ENCODE measurements at regions of chr10 and their contacts with region 1.

Region 1: DNA sequence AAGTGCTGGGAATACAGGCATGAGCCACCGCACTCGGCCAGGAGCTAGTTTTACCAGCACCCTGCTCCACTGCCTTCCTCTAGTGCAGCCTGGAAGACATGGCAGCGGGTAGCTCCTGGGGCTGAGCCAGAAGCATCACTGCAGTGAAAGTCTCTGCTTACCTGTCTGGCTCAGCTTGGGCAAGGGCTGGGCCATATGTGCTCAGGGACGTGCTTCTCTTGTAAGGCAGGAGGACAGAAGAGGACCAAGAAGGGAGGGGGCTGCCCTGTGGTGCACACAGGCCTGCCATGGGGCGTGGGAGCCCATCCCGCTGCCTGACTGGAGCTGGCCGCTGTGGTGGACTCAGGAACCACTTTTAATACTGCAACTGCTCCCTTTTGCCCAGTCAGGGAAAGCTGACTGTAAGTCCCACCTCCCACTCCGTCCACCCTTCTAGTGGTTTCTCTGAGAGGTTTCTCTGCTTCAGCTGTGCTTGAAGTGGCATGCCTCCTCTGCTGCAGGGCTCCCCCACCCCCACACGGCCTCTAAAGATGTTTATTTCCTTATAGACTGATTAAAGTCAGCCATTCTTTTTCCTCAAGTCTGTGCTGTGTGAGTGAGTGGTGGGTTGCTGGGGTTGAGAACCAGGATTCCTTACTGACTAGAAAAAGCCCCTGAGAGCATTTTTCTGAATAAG is 25.3 kb upstream of the C10orf95 start:
- DNase-seq: peak in 5 of 9 experiments; percentile 13 to 60 (median 24)
- ATAC-seq: no peak
- H3K4me3 ChIP-seq: no peak overlapping the region
- H3K4me3 Mint-ChIP-seq: peak overlapping the region; percentile 29
- H3K27ac ChIP-seq: peak overlapping the region in 1 of 2 experiments; percentile 43
- H3K27ac Mint-ChIP-seq: peak overlapping the region; percentile 79
- H3K4me1 ChIP-seq: peaks cover 36% of the 10 kb centered on the region
- H3K4me1 Mint-ChIP-seq: peaks cover 43% of the 10 kb centered on the region
- H3K27me3 ChIP-seq: no peaks in the 10 kb centered on the region
- H3K27me3 Mint-ChIP-seq: no peaks in the 10 kb centered on the region
- CTCF ChIP-seq: no peak

Region 2: DNA sequence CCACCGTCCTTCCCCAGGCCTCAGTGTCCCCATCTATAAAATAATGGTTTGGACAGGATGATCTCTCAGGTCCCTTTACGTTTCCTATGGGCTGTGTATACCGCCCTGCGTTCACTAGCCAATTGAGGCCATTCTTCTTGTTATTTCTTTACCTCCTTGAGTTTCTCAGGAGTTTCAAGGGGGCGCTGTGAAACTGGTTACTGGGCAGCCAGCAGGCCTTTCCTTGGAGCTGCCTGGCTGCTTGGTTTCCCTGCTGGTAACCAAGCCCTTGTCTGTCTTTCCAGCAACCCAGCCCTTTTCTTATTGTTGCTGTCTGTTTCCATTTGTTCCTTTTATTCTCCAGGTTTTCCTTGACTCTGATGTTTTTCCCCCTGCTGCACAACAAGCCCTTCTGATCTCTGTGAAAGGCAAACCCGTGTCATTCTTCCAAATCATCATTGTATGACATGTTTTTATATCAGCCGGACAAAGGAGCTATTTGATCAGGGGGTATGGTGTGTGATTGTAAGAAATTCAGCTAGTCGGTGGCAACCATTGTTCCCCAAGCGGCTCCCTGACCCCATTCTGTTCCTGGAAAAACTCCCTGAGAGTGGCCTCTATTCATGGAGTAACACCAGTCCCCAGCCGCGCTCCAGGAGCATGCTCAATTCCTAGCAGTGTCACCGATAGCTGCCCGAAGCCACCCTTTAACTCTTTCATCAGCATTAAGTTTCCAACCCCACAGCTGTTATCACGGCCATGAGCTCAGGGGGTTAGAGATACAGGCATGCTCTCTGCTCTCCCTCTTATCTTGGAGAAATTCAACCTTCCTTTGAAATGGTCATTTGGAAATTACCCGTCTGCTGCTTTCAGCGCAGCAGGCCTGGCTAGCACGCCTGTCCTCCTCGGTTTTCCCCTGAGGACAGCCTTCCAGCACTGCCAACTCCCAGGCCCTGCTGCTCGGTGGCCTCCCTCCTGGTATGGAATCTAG is 727.3 kb before region 1 on chr10:
- CTCF ChIA-PET with region 1: no interaction called
- POLR2A ChIA-PET with region 1: no interaction called
- intact Hi-C with region 1: no loop called
- DNase-seq: no peak
- ATAC-seq: no peak
- H3K4me3 ChIP-seq: no peak overlapping the region
- H3K4me3 Mint-ChIP-seq: no peak overlapping the region
- H3K27ac ChIP-seq: no peak overlapping the region
- H3K27ac Mint-ChIP-seq: no peak overlapping the region
- H3K4me1 ChIP-seq: no peaks in the 10 kb centered on the region
- H3K4me1 Mint-ChIP-seq: no peaks in the 10 kb centered on the region
- H3K27me3 ChIP-seq: peaks cover 0 to 3% of the 10 kb centered on the region in 2 experiments
- H3K27me3 Mint-ChIP-seq: peaks cover 9% of the 10 kb centered on the region
- CTCF ChIP-seq: no peak

Region 3: GRCh38 chr10:102384053-102384452 is 92.6 kb before region 1 on chr10:
- CTCF ChIA-PET with region 1: interaction called, 18 read pairs
- POLR2A ChIA-PET with region 1: no interaction called
- intact Hi-C with region 1: loop called in 1 of 2 experiments (anchors 2 kb)
- DNase-seq: peak in 4 of 9 experiments; percentile 26 to 52 (median 38)
- ATAC-seq: peak; percentile 42
- H3K4me3 ChIP-seq: no peak overlapping the region
- H3K4me3 Mint-ChIP-seq: no peak overlapping the region
- H3K27ac ChIP-seq: no peak overlapping the region
- H3K27ac Mint-ChIP-seq: no peak overlapping the region
- H3K4me1 ChIP-seq: no peaks in the 10 kb centered on the region
- H3K4me1 Mint-ChIP-seq: no peaks in the 10 kb centered on the region
- H3K27me3 ChIP-seq: no peaks in the 10 kb centered on the region
- H3K27me3 Mint-ChIP-seq: no peaks in the 10 kb centered on the region
- CTCF ChIP-seq: no peak

Region 4: DNA sequence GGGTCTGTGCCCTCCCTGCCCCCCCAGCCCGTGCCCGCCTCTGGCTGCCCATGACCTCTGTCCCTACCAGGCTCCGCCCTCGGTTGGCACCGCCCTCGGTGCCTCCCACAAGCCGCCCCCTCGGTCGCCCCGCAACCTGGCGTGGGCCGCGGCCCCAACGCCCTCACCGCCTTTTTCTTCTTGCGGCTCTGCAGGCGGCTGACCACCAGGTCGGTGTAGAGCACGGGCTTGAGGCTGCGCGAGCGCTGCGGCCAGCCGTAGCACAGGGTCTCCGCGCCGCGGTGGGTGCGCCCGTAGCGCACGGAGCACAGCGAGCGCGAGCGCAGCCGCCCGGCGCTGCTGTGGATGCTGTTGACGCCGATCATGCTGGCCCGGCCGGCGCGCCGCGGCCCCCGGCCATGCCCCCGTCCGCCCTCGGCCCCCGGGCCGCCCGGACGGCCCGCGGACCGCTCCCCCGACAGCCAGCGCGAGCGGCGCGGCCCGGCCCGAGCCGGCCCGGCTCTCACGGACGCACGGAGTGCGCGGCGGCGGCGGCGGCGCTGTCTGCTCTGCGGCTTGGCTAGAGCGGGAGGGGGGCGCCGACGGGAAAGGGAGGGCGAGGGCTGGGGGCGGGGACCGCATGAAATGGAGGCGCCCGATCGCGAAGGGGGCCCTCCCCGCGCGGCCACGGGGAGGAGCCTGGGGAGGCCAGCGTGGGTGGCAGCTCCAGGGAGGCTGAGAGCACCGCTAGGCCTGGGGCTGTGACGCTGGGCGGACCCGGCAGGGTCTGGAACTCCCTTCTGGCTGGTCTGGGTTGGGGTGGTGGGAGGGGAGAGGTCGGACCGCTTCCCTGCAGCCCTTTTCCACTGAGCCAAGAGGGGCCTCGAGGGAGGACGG is 67.6 kb before region 1 on chr10:
- CTCF ChIA-PET with region 1: interaction called, 18 read pairs
- POLR2A ChIA-PET with region 1: no interaction called
- intact Hi-C with region 1: no loop called
- DNase-seq: peak; percentile 49 to 86 (median 79)
- ATAC-seq: peak; percentile 72
- H3K4me3 ChIP-seq: peak overlapping the region; percentile 39 to 68
- H3K4me3 Mint-ChIP-seq: peak overlapping the region; percentile 83
- H3K27ac ChIP-seq: peak overlapping the region; percentile 31 to 43
- H3K27ac Mint-ChIP-seq: peak overlapping the region; percentile 91
- H3K4me1 ChIP-seq: peaks cover 36% of the 10 kb centered on the region
- H3K4me1 Mint-ChIP-seq: peaks cover 37% of the 10 kb centered on the region
- H3K27me3 ChIP-seq: peaks cover 0 to 26% of the 10 kb centered on the region in 2 experiments
- H3K27me3 Mint-ChIP-seq: peaks cover 17% of the 10 kb centered on the region
- CTCF ChIP-seq: no peak

Region 5: GRCh38 chr10:102432162-102432950 is 44.2 kb before region 1 on chr10 and contains the start of gene CUEDC2:
- CTCF ChIA-PET with region 1: interaction called, 5 read pairs
- POLR2A ChIA-PET with region 1: interaction called, 5 read pairs
- intact Hi-C with region 1: loop called in 1 of 2 experiments (anchors 1 kb)
- DNase-seq: peak; percentile 88 to 98 (median 93)
- ATAC-seq: peak; percentile 93
- H3K4me3 ChIP-seq: peak within 1 kb of the TSS; percentile 76 to 96
- H3K4me3 Mint-ChIP-seq: peak within 1 kb of the TSS; percentile 95
- H3K27ac ChIP-seq: peak within 1 kb of the TSS; percentile 62 to 67
- H3K27ac Mint-ChIP-seq: peak within 1 kb of the TSS; percentile 89
- H3K4me1 ChIP-seq: peaks cover 48% of the 10 kb centered on the region
- H3K4me1 Mint-ChIP-seq: peaks cover 49% of the 10 kb centered on the region
- H3K27me3 ChIP-seq: no peaks in the 10 kb centered on the region
- H3K27me3 Mint-ChIP-seq: no peaks in the 10 kb centered on the region
- CTCF ChIP-seq: no peak
- total RNA-seq, gene CUEDC2: 24.2 to 27.0 TPM

Region 6: GRCh38 chr10:102461187-102462054 is 15.2 kb before region 1 on chr10:
- CTCF ChIA-PET with region 1: interaction called, 18 read pairs
- POLR2A ChIA-PET with region 1: interaction called, 6 read pairs
- intact Hi-C with region 1: loop called in 1 of 2 experiments (anchors 1 kb)
- DNase-seq: peak; percentile 85 to 96 (median 93)
- ATAC-seq: peak; percentile 99
- H3K4me3 ChIP-seq: peak overlapping the region; percentile 67 to 76
- H3K4me3 Mint-ChIP-seq: peak overlapping the region; percentile 89
- H3K27ac ChIP-seq: peak overlapping the region in 1 of 2 experiments; percentile 59
- H3K27ac Mint-ChIP-seq: peak overlapping the region; percentile 79
- H3K4me1 ChIP-seq: peaks cover 20% of the 10 kb centered on the region
- H3K4me1 Mint-ChIP-seq: peaks cover 35% of the 10 kb centered on the region
- H3K27me3 ChIP-seq: no peaks in the 10 kb centered on the region
- H3K27me3 Mint-ChIP-seq: no peaks in the 10 kb centered on the region
- CTCF ChIP-seq: no peak

Measured in CD8-positive, alpha-beta T cell (primary cell).